ENCODE measurements at regions of chr12 and their contacts with region 1.

Region 1: GRCh38 chr12:122190842-122191668 is 8.1 kb downstream of the LRRC43 start:
- DNase-seq: peak; percentile 86
- H3K4me3 Mint-ChIP-seq: no peak overlapping the region
- H3K27ac Mint-ChIP-seq: no peak overlapping the region
- H3K4me1 Mint-ChIP-seq: no peaks in the 10 kb centered on the region
- H3K27me3 Mint-ChIP-seq: peaks cover 27% of the 10 kb centered on the region
- CTCF ChIP-seq: peak; percentile 84

Region 2: DNA sequence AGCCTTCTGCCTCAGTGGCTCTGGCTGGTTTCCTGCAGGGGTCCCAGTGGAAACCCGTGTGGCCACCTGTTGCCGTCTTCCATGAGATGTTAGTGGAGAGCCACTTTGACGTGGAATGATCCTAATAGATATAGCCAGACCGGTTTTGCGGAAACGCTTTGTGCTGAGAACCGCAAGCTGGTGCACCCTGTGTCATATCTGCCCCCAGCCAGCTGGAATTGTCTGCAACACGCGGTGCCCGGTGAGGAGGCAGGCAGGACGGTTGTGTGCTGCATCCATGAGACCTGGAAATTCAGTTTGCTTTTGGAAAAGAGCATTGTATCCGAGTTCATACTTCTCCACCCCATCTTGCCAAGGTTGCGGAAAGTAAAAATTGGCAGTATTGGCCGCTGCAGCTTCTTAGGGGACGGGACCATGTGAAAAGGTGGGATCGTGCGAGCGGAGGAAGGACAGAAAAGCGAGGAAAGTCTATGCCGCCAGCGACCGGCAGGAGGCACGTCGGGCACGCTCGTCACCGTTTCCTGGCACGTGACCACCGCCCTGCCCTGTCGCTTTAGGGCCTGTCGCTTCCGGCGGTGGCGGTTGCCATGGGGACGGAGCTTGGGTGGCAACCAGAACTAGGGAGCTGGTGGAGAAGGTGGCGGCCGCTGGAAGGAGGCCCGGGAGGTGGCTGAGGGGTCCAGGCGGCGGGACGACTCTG is 272.9 kb before region 1 on chr12 and contains the start of gene CFAP251:
- CTCF ChIA-PET with region 1: interaction called, 4 read pairs
- intact Hi-C with region 1: loop called (anchors 10 kb)
- DNase-seq: peak; percentile 97
- H3K4me3 Mint-ChIP-seq: peak within 1 kb of the TSS; percentile 80
- H3K27ac Mint-ChIP-seq: peak within 1 kb of the TSS; percentile 98
- H3K4me1 Mint-ChIP-seq: peaks cover 14% of the 10 kb centered on the region
- H3K27me3 Mint-ChIP-seq: no peaks in the 10 kb centered on the region
- CTCF ChIP-seq: peak; percentile 53
- total RNA-seq, gene CFAP251: 3.8 and 5.0 TPM in 2 replicates

Region 3: GRCh38 chr12:122054842-122055520 is 136.1 kb before region 1 on chr12:
- CTCF ChIA-PET with region 1: interaction called, 7 read pairs
- intact Hi-C with region 1: loop called (anchors 1 kb)
- DNase-seq: no peak
- H3K4me3 Mint-ChIP-seq: no peak overlapping the region
- H3K27ac Mint-ChIP-seq: no peak overlapping the region
- H3K4me1 Mint-ChIP-seq: peaks cover 9% of the 10 kb centered on the region
- H3K27me3 Mint-ChIP-seq: no peaks in the 10 kb centered on the region
- CTCF ChIP-seq: no peak

Region 4: GRCh38 chr12:122130150-122130549 is 60.9 kb before region 1 on chr12:
- CTCF ChIA-PET with region 1: interaction called, 12 read pairs
- intact Hi-C with region 1: loop called (anchors 1 kb)
- DNase-seq: peak; percentile 58
- H3K4me3 Mint-ChIP-seq: no peak overlapping the region
- H3K27ac Mint-ChIP-seq: no peak overlapping the region
- H3K4me1 Mint-ChIP-seq: peaks cover 7% of the 10 kb centered on the region
- H3K27me3 Mint-ChIP-seq: no peaks in the 10 kb centered on the region
- CTCF ChIP-seq: no peak

Region 5: DNA sequence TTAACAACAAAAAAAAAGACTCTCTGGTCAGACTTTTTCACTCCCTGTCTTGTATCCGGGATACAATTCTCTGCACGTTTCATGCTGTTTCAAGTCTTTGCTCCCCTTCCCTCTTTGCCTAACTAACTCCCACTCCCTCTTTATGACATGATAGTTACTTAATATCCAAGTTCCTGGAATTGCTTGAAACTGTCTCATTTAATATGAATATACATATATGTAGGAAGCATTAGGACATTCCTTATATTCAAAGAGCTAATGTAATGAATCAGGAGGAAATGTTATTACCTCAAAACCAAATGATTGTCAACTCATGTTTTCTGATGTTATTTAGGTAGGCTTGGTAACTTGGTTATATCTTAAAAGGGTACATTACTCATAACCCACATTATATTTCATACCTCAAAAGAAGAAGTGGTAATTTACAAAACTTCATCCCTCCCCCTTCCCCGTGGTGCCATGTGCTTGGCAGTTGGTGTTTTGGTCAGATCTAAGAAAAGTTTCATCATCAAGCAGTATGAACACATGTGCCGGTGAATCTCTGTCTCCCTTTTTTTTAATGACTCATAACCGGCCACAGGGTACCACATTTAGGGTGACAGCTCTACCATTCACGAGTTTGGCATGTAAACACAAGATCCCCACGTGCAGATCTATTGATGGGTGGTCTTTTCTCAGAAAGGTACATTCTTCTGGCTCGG is 455.6 kb after region 1 on chr12:
- CTCF ChIA-PET with region 1: no interaction called
- intact Hi-C with region 1: no loop called
- DNase-seq: no peak
- H3K4me3 Mint-ChIP-seq: no peak overlapping the region
- H3K27ac Mint-ChIP-seq: no peak overlapping the region
- H3K4me1 Mint-ChIP-seq: peaks cover 7% of the 10 kb centered on the region
- H3K27me3 Mint-ChIP-seq: no peaks in the 10 kb centered on the region
- CTCF ChIP-seq: no peak

Measured in Calu3 (cell line).